Mammary epithelial cell (primary cell): ENCODE measurements at regions of chr2 and their contacts with region 1.

Region 1: GRCh38 chr2:191593622-191594416 is 84.1 kb upstream of the NABP1 start:
- DNase-seq: peak; percentile 95
- H3K4me3 ChIP-seq: peak overlapping the region in 1 of 3 experiments; percentile 10
- H3K27ac ChIP-seq: peak overlapping the region; percentile 96
- H3K4me1 ChIP-seq: peaks cover 18% of the 10 kb centered on the region
- H3K27me3 ChIP-seq: no peaks in the 10 kb centered on the region
- CTCF ChIP-seq: no peak

Region 2: DNA sequence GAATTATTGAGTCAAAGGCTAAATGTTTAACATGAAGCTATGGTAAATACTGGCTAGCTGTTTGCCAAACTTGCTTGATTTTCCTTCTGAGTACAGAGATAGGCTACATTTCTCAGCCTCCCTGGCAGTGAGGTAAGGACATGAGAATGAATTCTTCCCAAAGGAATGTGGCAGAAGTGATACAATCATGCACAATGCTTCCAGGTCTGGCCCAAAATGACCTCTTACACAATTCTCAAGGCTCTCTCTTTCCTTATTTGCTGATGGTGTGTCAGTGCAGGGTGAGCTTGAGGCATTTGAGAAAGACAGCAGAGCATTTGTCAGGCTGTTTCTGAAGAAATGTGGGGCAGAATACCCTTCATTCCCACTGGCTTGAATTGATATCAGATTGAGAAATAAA is 11.5 kb before region 1 on chr2:
- CTCF ChIA-PET with region 1: no interaction called
- dilution Hi-C with region 1: no loop called
- in situ Hi-C with region 1: no loop called
- intact Hi-C with region 1: loop called (anchors 1 kb)
- DNase-seq: peak; percentile 77
- H3K4me3 ChIP-seq: no peak overlapping the region
- H3K27ac ChIP-seq: peak overlapping the region; percentile 22
- H3K4me1 ChIP-seq: peaks cover 9% of the 10 kb centered on the region
- H3K27me3 ChIP-seq: no peaks in the 10 kb centered on the region
- CTCF ChIP-seq: no peak

Region 3: DNA sequence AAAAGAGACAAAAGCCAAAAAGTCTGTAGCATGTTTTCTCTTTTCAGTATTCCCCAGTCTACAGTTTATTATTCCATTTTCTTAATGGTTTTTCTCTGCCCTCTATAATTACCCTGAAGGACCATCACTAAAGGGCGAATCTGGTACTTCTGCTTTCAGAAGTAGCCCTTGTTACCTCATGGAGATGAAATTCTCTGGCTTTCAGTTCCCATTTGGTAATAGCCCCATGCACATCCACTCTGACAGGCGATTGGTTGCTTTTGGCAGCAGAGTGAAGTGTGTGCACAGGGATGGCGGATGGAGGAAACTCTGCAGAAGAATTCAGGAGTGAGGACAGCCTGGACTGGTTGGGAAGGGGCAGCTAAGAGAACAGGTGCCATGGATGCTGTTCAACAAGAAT is 17.8 kb after region 1 on chr2:
- CTCF ChIA-PET with region 1: no interaction called
- dilution Hi-C with region 1: no loop called
- in situ Hi-C with region 1: no loop called
- intact Hi-C with region 1: loop called (anchors 2 kb)
- DNase-seq: no peak
- H3K4me3 ChIP-seq: no peak overlapping the region
- H3K27ac ChIP-seq: peak overlapping the region; percentile 86
- H3K4me1 ChIP-seq: peaks cover 8% of the 10 kb centered on the region
- H3K27me3 ChIP-seq: no peaks in the 10 kb centered on the region
- CTCF ChIP-seq: no peak

Region 4: DNA sequence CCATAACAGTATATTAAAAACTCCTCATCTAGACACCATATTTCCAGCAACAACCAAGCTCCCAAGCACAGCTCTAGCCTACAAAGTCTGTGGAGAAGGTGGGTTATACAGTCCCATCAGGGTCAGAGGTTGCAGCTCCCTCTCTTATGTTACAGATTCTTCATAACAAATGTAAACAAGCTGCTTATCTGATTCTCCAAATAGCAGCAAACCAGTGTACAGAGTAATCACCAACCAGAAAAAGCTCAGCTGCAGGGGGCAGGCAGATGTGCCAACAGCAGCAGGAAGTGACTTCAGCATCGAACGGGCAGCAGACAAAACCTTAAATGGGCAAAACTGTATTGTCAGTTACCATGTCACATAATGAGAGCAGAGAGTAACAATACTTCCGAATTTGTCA is 31.2 kb after region 1 on chr2:
- CTCF ChIA-PET with region 1: no interaction called
- dilution Hi-C with region 1: no loop called
- in situ Hi-C with region 1: no loop called
- intact Hi-C with region 1: no loop called
- DNase-seq: no peak
- H3K4me3 ChIP-seq: no peak overlapping the region
- H3K27ac ChIP-seq: no peak overlapping the region
- H3K4me1 ChIP-seq: peaks cover 52% of the 10 kb centered on the region
- H3K27me3 ChIP-seq: no peaks in the 10 kb centered on the region
- CTCF ChIP-seq: no peak

Region 5: DNA sequence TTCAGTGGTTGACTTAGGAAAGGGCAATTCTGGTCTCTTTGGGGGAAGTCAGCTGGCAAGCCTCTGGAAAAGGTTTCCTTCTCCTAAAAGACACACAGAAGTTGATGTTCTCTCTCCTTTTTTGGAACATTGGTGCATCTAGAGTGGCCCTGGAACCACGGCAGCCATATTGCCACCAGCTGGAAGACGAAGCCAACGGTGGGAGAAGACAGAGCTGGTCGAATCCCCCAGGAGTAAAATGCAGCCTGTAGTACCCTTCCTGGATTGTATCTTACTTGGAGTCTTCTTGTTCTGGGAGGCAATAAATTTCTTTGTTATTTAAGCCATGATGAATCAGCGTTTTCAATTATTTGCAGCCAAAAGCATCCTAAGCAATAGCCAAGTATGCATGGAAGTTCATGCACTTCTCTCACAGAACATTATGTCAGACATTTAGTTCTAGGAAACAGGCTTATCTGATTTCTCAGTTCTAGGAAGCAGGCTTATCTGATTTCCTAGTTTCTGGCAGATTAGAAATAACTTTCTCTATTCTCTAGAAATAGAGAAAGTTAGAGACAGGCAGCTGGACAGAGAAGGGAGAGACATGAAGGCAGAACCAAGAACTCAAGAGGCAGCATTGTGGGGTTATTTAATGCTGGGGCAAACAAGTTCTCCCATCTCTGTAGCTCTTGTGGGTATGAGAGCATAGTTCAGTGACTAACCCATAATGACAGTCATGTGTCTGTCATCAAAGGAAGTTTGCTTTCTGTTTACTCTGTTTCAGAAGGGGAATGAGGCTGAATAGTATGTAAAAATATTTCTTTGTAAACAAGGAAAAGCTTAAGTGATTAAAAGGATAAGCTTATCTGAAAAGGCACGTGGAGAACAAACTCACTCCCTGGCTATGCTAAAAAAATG is 43.6 kb after region 1 on chr2:
- CTCF ChIA-PET with region 1: no interaction called
- dilution Hi-C with region 1: no loop called
- in situ Hi-C with region 1: no loop called
- intact Hi-C with region 1: loop called (anchors 5 kb)
- DNase-seq: peak; percentile 77
- H3K4me3 ChIP-seq: no peak overlapping the region
- H3K27ac ChIP-seq: peak overlapping the region; percentile 40
- H3K4me1 ChIP-seq: peaks cover 41% of the 10 kb centered on the region
- H3K27me3 ChIP-seq: no peaks in the 10 kb centered on the region
- CTCF ChIP-seq: no peak